CD8-positive, alpha-beta T cell (primary cell): ENCODE measurements at regions of chr1 and their contacts with region 1.

Region 1: DNA sequence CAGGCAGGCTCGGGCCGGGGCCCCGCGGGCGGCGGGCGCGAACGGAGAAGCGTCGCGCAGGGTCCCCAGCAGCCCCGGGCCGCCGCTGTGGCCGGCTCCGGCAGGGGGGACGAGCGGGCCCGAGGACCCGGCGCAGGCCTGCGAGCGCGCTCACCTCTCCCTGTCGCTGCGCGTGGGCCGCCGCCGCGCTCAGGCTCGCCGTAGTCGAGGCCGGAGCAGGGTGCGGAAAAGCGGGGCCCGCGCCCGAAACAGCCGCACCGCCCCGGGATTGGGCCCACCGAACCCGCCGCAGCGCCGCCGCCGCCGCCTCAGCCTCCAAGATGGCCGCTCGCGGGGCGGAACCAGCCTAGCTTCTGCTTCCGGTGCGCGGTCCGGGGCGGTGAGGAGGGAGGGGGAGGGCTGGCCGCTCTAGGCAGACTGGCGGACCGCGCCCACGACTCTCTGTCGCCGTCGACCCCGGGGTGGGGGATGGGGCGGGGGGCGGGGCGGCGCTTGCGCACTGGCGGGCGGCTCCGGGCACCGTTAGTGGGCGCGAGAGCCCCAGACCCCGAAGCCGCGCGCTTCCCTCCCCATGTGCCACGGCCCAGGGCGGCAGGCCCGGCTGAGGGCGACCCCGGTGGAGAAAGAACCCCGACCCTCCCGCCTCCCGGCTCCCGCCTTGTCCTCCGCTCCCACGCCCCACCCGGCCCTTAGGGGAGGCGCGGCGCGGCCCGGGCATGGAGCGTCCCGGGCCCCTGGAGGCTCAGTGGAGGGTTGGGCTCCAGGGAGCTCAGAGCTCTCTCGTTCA is at the start of gene UBE2J2:
- DNase-seq: peak; percentile 86 to 96 (median 93)
- ATAC-seq: peak; percentile 95
- H3K4me3 ChIP-seq: peak within 1 kb of the TSS; percentile 69 to 91
- H3K4me3 Mint-ChIP-seq: peak within 1 kb of the TSS; percentile 88
- H3K27ac ChIP-seq: peak within 1 kb of the TSS; percentile 53 to 63
- H3K27ac Mint-ChIP-seq: peak within 1 kb of the TSS; percentile 89
- H3K4me1 ChIP-seq: peaks cover 39% of the 10 kb centered on the region
- H3K4me1 Mint-ChIP-seq: peaks cover 40% of the 10 kb centered on the region
- H3K27me3 ChIP-seq: no peaks in the 10 kb centered on the region
- H3K27me3 Mint-ChIP-seq: no peaks in the 10 kb centered on the region
- CTCF ChIP-seq: no peak
- total RNA-seq, gene UBE2J2: 46.4 to 50.7 TPM

Region 2: GRCh38 chr1:1250786-1251284 is 22.9 kb before region 1 on chr1:
- CTCF ChIA-PET with region 1: interaction called, 3 read pairs
- POLR2A ChIA-PET with region 1: interaction called, 3 read pairs
- intact Hi-C with region 1: loop called in 1 of 2 experiments (anchors 2 kb)
- DNase-seq: peak; percentile 30 to 91 (median 74)
- ATAC-seq: peak; percentile 99
- H3K4me3 ChIP-seq: peak overlapping the region in 1 of 2 experiments; percentile 10
- H3K4me3 Mint-ChIP-seq: peak overlapping the region; percentile 72
- H3K27ac ChIP-seq: peak overlapping the region; percentile 40 to 63
- H3K27ac Mint-ChIP-seq: peak overlapping the region; percentile 93
- H3K4me1 ChIP-seq: peaks cover 25% of the 10 kb centered on the region
- H3K4me1 Mint-ChIP-seq: peaks cover 15% of the 10 kb centered on the region
- H3K27me3 ChIP-seq: peaks cover 0 to 6% of the 10 kb centered on the region in 2 experiments
- H3K27me3 Mint-ChIP-seq: no peaks in the 10 kb centered on the region
- CTCF ChIP-seq: no peak

Region 3: DNA sequence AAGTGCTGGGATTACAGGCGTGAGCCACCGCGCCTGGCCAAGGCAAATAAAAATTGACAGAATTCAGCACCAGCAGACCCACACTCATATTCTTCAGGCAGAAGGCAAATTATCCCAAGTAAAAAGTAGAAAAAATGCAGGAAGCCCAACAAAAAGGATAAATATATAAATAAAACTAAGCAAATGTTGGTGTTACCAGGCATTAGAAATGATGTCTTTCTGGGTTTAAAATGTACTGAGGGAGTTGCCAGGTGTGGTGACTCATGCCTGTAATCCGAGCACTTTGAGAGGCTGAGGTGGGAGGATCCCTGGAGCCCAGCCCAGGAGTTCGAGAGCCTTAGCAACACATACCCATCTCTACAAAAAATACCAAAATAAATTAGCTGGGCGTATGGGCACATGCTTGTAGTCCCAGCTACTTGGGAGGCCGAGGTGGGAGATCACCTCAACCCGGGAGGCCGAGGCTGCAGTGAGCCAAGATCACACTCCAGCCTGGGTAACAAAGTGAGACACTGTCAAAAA is 44.5 kb after region 1 on chr1:
- CTCF ChIA-PET with region 1: no interaction called
- POLR2A ChIA-PET with region 1: no interaction called
- intact Hi-C with region 1: no loop called
- DNase-seq: no peak
- ATAC-seq: no peak
- H3K4me3 ChIP-seq: no peak overlapping the region
- H3K4me3 Mint-ChIP-seq: no peak overlapping the region
- H3K27ac ChIP-seq: no peak overlapping the region
- H3K27ac Mint-ChIP-seq: no peak overlapping the region
- H3K4me1 ChIP-seq: peaks cover 13% of the 10 kb centered on the region
- H3K4me1 Mint-ChIP-seq: peaks cover 21% of the 10 kb centered on the region
- H3K27me3 ChIP-seq: no peaks in the 10 kb centered on the region
- H3K27me3 Mint-ChIP-seq: no peaks in the 10 kb centered on the region
- CTCF ChIP-seq: no peak

Region 4: DNA sequence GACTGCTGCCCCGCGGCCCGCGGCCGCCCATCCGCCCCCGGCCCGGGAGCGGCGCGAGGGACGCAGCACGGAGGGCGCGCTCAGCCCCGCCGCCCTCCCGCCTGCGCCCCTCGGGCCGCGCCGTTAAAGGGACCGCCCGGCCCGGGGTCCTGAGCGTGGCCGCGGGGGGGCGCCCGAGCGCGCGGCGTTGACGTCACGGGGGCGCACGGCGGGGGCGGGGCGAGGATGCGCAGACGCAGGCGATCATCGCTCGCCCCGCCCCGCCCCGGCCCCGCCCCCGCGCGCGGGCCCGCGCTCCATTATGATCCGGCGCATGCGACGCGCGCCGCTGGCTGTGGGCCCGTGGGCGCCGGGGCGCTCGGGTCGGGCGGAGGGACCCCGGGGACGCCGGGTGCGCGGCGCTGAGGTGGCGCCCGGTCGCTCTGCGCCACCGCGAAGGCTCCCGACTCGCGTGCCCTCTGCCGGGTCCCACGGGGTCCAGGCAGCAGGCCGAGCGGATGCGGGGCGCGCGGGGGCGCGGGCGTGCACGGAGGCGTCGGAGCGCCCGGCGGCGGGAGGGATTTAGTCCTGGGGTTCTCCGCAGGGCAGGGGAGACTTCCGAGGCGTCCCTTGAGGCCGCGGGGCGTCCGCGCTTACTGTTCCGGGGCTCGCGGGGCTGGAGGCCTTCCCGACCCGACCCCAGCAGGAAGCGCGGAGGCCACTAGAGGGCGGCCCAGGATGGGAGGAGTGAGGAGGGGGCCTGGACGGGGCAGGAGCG is 75.7 kb after region 1 on chr1 and contains the start of gene DVL1:
- CTCF ChIA-PET with region 1: no interaction called
- POLR2A ChIA-PET with region 1: no interaction called
- intact Hi-C with region 1: loop called in 1 of 2 experiments (anchors 1 kb)
- DNase-seq: peak; percentile 50 to 86 (median 72)
- ATAC-seq: peak; percentile 84
- H3K4me3 ChIP-seq: peak within 1 kb of the TSS; percentile 57 to 63
- H3K4me3 Mint-ChIP-seq: peak within 1 kb of the TSS; percentile 76
- H3K27ac ChIP-seq: peak within 1 kb of the TSS; percentile 46 to 72
- H3K27ac Mint-ChIP-seq: peak within 1 kb of the TSS; percentile 41
- H3K4me1 ChIP-seq: peaks cover 27% of the 10 kb centered on the region
- H3K4me1 Mint-ChIP-seq: peaks cover 29% of the 10 kb centered on the region
- H3K27me3 ChIP-seq: peaks cover 0 to 16% of the 10 kb centered on the region in 2 experiments
- H3K27me3 Mint-ChIP-seq: peaks cover 8% of the 10 kb centered on the region
- CTCF ChIP-seq: peak; percentile 43
- total RNA-seq, gene DVL1: 44.5 to 45.5 TPM